ENCODE measurements at regions of chr18 and their contacts with region 1.

Region 1: DNA sequence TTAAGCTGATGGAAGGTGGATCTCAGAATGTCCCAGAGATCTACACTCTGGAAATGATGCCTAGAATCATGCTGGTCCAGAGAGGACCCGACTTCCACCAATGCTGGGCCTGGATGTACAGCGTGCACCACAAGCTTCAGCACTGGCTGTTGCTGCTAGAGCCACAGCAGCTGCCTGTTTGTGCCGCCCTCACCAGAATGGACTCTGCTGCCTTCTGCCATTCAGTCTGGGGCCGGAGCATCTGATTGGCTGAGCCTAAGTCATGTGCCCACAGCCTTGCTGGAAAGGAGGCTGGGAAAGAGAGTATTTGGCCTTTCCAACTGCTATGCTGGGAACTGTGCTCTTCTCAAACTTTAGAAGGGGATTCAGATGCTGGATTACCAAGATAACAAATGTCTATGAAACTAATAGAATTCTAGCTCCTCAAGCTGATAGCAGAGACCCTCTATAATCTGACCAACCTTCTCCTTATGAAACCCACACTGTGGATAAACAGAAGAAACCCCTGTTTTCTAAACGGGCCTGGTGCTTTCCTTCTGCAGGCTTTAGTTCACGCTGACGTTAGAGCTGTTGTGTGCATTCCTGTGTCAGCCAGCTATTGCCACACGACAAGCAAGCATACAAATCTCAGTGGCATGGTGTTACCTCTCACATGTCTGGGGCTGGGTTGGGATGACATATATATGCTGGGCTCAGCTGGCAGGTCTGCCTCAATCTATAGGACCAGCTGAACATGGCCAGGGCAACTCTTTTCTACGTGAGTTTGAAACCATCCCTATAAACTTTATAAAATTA is 4.1 kb upstream of the LOXHD1 start:
- DNase-seq: no peak
- H3K4me3 Mint-ChIP-seq: no peak overlapping the region
- H3K27ac Mint-ChIP-seq: no peak overlapping the region
- H3K4me1 Mint-ChIP-seq: no peaks in the 10 kb centered on the region
- H3K27me3 Mint-ChIP-seq: no peaks in the 10 kb centered on the region

Region 2: DNA sequence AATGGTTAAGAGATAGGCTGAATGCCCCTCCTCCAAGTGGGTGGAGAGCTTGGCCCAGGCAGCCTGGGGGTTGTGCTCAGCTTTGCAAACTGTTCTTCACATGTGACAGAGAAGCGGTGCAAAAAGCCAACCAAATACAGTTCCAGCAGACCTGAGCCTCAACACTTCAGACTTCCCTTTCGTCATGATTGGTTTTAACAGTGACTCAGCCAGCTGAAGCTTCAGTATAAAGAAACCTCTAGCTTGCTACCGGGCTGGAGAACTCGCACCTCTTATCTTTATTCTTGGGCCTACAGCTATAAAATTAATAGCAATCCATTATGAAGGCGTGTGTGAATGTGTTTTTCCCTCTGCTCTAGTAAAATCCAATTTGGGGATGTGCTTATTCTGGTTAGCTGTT is 1960.5 kb before region 1 on chr18:
- CTCF ChIA-PET with region 1: no interaction called
- intact Hi-C with region 1: no loop called
- DNase-seq: no peak
- H3K4me3 Mint-ChIP-seq: no peak overlapping the region
- H3K27ac Mint-ChIP-seq: no peak overlapping the region
- H3K4me1 Mint-ChIP-seq: peaks cover 16% of the 10 kb centered on the region
- H3K27me3 Mint-ChIP-seq: peaks cover 20% of the 10 kb centered on the region

Region 3: GRCh38 chr18:46051731-46052461 is 609.3 kb before region 1 on chr18:
- CTCF ChIA-PET with region 1: no interaction called
- intact Hi-C with region 1: no loop called
- DNase-seq: no peak
- H3K4me3 Mint-ChIP-seq: no peak overlapping the region
- H3K27ac Mint-ChIP-seq: no peak overlapping the region
- H3K4me1 Mint-ChIP-seq: peaks cover 43% of the 10 kb centered on the region
- H3K27me3 Mint-ChIP-seq: no peaks in the 10 kb centered on the region

Region 4: GRCh38 chr18:46148810-46149209 is 512.3 kb before region 1 on chr18:
- CTCF ChIA-PET with region 1: interaction called, 42 read pairs
- intact Hi-C with region 1: loop called (anchors 1 kb)
- DNase-seq: peak; percentile 70
- H3K4me3 Mint-ChIP-seq: no peak overlapping the region
- H3K27ac Mint-ChIP-seq: peak overlapping the region; percentile 39
- H3K4me1 Mint-ChIP-seq: peaks cover 31% of the 10 kb centered on the region
- H3K27me3 Mint-ChIP-seq: no peaks in the 10 kb centered on the region

Region 5: DNA sequence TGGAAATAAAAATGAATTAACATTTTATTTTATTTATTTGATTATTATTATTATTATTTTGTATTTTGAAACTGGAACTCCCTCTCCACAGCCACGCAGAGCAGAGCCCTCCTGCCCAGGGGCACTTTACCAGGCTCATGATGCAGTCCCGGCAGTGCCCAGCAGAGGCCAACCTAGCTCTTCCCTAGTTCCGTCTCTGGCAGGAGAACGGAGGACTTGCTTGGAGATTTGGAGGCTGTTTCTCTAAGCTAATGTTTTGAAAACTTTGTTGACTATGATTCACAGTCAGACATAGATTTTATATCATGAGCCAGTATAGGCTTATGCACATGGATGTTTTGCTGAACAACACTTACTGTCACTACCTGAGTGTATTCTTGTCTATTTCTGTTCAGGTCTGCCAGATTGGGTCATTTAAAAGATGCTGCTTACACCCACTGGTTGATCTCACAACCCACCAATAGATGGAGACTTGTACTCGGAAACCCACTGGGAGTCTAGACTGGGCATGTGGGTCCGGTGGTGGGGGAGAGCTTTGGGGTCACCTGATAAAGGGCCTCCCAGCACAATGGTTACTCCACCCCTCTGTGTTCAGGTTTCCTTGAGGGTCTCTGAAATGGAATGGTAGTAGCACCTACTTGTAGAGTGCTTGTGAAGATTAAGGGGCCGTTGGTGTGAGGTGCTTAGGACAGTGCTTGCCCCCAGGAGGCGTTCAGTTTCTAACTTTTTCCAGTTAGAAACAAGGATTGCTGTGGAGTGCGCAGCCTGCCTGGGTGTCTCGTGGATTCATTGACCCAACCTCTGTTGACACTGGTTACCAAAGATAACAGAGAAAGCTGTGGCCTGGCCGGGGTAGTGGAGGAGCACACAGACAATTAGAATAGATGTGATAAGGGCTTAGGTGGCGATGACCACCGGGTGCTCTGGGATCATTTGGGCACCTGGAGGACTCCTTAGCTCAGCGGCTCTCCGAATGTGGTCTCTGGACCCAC is 379.7 kb before region 1 on chr18:
- CTCF ChIA-PET with region 1: interaction called, 53 read pairs
- intact Hi-C with region 1: loop called (anchors 1 kb)
- DNase-seq: peak; percentile 78
- H3K4me3 Mint-ChIP-seq: no peak overlapping the region
- H3K27ac Mint-ChIP-seq: no peak overlapping the region
- H3K4me1 Mint-ChIP-seq: peaks cover 5% of the 10 kb centered on the region
- H3K27me3 Mint-ChIP-seq: no peaks in the 10 kb centered on the region

Region 6: DNA sequence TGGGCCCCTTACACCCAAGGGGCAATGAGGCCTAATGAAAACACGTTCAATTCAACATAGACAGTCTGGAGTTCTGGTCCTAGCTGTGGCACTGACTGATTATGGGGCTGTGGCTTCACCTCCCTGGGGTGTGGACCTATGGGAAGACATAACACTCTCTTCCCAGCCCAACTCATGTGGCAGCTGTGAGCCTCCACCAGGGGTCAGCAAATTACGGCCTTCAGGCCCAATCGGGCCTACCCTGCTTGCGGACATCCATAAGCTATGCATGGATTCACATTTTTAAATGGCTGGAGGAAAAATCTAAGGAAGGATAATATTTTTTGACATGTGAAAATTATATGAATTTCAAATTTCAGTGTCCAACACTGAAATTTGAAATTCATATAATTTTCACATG is 105.4 kb before region 1 on chr18:
- CTCF ChIA-PET with region 1: interaction called, 20 read pairs
- intact Hi-C with region 1: loop called (anchors 1 kb)
- DNase-seq: peak; percentile 16
- H3K4me3 Mint-ChIP-seq: no peak overlapping the region
- H3K27ac Mint-ChIP-seq: no peak overlapping the region
- H3K4me1 Mint-ChIP-seq: no peaks in the 10 kb centered on the region
- H3K27me3 Mint-ChIP-seq: no peaks in the 10 kb centered on the region

Region 7: DNA sequence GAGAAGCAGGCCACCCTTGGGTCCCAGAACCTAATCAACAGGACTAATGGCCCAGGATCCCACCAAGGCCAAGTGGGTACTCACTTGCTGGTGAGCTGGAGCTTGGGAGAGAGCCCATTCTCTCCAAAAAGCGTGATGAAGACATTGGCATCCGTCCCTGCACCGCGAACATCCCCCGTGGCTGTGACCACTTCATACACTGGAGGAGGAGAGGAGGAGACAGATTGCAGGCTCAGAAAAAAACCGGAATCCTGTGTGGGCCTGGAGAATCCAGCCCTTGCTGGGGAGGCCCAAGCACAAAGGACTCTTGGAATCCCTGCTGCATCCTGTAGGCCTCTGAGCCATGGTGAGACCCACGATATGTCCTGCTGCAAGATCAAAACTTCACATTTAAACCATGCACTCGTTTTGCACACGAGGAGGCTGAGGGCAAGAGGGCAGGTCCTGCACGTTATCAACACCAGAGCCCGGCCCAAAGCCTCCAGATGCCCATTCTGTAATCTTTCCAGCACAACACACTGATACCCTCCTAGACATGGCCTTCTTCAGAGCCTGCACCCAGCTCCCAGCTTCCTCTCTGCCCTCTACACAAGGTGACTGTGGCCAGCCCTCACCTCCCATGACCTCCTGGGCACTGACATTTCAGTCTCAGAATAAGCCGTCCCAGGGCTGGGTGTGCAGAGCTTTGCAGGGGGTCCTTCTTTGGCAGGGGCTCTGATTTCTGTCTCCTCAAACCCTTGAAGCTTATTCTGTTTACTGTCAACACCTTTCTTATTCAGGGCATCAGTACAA is 11.9 kb before region 1 on chr18:
- CTCF ChIA-PET with region 1: interaction called, 14 read pairs
- intact Hi-C with region 1: no loop called
- DNase-seq: no peak
- H3K4me3 Mint-ChIP-seq: no peak overlapping the region
- H3K27ac Mint-ChIP-seq: no peak overlapping the region
- H3K4me1 Mint-ChIP-seq: no peaks in the 10 kb centered on the region
- H3K27me3 Mint-ChIP-seq: no peaks in the 10 kb centered on the region

Measured in activated naive CD4-positive, alpha-beta T cell treated with anti-CD3 and anti-CD28 coated beads for 36 hours (primary cell).